Activated CD8-positive, alpha-beta T cell treated with anti-CD3 and anti-CD28 coated beads, Interleukin-2, amount 10 ng/mL, durations not matched to agents 7 days and 5 days (primary cell): ENCODE measurements at regions of chr9 and their contacts with region 1.

Region 1: GRCh38 chr9:21777701-21778100 is 24.7 kb upstream of the MTAP start:
- DNase-seq: peak; percentile 44
- ATAC-seq: peak; percentile 58
- H3K4me3 Mint-ChIP-seq: no peak overlapping the region
- H3K27ac Mint-ChIP-seq: no peak overlapping the region
- H3K4me1 Mint-ChIP-seq: peaks cover 4% of the 10 kb centered on the region
- H3K27me3 Mint-ChIP-seq: peaks cover 3% of the 10 kb centered on the region

Region 2: DNA sequence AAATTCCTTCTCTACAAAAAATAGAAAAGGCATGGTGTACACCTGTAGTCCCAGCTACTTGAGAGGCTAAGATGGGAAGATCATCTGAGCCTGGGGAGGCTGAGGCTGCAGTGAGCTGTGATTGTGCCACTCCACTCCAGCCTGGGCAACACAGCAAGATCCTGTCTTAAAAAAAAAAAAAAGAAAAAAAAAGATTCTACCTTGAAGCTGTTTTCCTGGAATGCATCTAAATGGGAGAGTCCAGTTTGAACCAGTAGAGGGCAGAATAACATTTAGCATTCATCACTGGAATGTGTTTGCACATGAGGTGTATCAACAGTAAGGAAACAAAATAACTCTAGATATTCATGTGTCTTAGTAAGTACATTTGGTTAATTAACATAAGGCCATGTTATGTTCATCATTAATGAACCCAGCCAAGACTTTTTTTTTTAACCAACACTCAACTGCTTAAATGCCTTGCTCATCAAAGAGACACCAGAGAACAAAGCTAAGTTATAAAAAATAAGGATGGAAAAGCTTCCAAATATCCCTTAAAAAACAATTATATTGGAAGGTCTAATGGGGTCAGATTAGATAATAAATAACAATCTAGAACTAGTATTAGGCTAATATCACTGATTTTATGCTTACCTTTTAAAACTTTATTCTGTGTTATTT is 311.7 kb before region 1 on chr9:
- CTCF ChIA-PET with region 1: interaction called, 14 read pairs
- POLR2A ChIA-PET with region 1: no interaction called
- DNase-seq: peak; percentile 43
- ATAC-seq: peak; percentile 65
- H3K4me3 Mint-ChIP-seq: no peak overlapping the region
- H3K27ac Mint-ChIP-seq: no peak overlapping the region
- H3K4me1 Mint-ChIP-seq: no peaks in the 10 kb centered on the region
- H3K27me3 Mint-ChIP-seq: peaks cover 15% of the 10 kb centered on the region

Region 3: GRCh38 chr9:21789541-21790037 is 11.9 kb after region 1 on chr9:
- CTCF ChIA-PET with region 1: interaction called, 11 read pairs
- POLR2A ChIA-PET with region 1: no interaction called
- DNase-seq: peak; percentile 71
- ATAC-seq: peak; percentile 97
- H3K4me3 Mint-ChIP-seq: peak overlapping the region; percentile 69
- H3K27ac Mint-ChIP-seq: no peak overlapping the region
- H3K4me1 Mint-ChIP-seq: peaks cover 6% of the 10 kb centered on the region
- H3K27me3 Mint-ChIP-seq: peaks cover 25% of the 10 kb centered on the region